Sciatic nerve (tissue), 2 donors: ENCODE measurements at regions of chr1 and their contacts with region 1.

Region 1: GRCh38 chr1:12559071-12559506 is 58.9 kb downstream of the DHRS3 start:
- DNase-seq: no peak
- ATAC-seq: no peak

Region 2: GRCh38 chr1:11531314-11531870 is 1027.7 kb before region 1 on chr1:
- intact Hi-C with region 1: no loop called
- DNase-seq: no peak
- ATAC-seq: no peak

Region 3: DNA sequence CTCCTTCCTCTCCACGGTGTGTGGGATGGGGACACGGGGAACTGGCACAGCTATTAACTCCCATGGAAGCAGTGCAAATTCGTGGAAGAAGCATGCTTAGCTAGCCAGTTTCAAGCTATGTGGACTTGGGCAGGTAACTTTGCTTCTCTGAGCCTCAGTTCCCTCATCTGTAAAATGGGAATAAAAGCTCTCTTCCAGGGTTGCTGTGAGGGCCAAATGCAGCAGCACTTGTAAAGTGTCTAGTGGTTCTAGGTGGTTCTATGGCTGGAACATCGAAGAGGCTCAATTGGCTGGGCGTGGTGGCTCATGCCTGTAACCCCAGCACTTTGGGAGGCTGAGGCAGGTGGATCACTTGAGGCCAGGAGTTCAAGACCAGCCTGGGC is 15.7 kb after region 1 on chr1:
- intact Hi-C with region 1: loop called (anchors 1 kb)
- DNase-seq: no peak
- ATAC-seq: no peak